ENCODE measurements at regions of chr10 and their contacts with region 1.

Region 1: GRCh38 chr10:124403548-124403947 is 15.2 kb downstream of the OAT start:
- DNase-seq: peak; percentile 58
- ATAC-seq: peak; percentile 97
- H3K4me3 Mint-ChIP-seq: no peak overlapping the region
- H3K27ac Mint-ChIP-seq: peak overlapping the region; percentile 70
- H3K4me1 Mint-ChIP-seq: peaks cover 10% of the 10 kb centered on the region
- H3K27me3 Mint-ChIP-seq: no peaks in the 10 kb centered on the region

Region 2: DNA sequence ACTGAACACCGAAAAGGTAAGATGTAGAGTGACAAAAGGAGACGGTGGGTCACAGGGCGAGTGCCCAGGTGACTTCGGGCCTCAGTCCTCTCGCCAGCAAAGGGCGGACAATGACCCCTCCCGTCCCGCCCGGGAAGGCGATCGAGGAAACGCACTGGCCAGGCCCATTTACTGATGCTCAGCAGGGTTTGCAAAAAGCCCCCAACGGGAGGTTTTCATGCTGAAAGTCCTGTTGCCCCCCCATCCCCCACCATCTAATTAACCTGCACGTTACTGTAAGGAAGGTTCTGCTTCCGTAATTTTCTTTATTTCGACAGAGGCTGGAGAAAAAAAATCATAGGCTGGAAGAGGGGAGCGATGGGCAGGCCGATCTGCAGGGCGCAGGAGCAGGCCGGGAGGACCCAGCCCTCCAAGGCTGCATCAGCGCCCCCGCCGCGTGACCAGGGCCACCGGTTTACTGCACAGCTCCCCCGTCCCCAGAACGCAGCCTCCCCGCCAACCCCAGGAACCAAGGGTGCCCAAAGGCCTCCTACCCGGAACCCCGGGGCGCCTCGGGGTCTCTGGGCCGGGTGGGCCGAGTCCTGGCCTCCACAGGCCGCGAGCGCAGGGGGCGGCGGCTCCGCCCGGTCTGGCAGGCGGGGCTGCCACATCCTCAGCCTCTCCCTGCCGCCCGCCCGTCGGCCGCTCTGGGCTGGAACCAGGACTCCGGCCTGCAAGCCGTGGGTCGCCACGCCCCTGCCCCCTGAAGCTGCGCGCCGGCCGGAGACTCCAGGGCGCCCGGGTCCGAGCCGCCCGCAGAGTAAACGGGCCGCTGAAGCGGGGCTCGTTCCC is 14.6 kb after region 1 on chr10:
- CTCF ChIA-PET with region 1: interaction called, 20 read pairs
- POLR2A ChIA-PET with region 1: interaction called, 6 read pairs
- DNase-seq: peak; percentile 61
- ATAC-seq: peak; percentile 58
- H3K4me3 Mint-ChIP-seq: peak overlapping the region; percentile 76
- H3K27ac Mint-ChIP-seq: peak overlapping the region; percentile 39
- H3K4me1 Mint-ChIP-seq: peaks cover 11% of the 10 kb centered on the region
- H3K27me3 Mint-ChIP-seq: peaks cover 10% of the 10 kb centered on the region

Measured in activated CD8-positive, alpha-beta T cell treated with anti-CD3 and anti-CD28 coated beads, Interleukin-2, amount 10 ng/mL, durations not matched to agents 7 days and 5 days (primary cell).